ENCODE measurements at regions of chr11 and their contacts with region 1.

Region 1: DNA sequence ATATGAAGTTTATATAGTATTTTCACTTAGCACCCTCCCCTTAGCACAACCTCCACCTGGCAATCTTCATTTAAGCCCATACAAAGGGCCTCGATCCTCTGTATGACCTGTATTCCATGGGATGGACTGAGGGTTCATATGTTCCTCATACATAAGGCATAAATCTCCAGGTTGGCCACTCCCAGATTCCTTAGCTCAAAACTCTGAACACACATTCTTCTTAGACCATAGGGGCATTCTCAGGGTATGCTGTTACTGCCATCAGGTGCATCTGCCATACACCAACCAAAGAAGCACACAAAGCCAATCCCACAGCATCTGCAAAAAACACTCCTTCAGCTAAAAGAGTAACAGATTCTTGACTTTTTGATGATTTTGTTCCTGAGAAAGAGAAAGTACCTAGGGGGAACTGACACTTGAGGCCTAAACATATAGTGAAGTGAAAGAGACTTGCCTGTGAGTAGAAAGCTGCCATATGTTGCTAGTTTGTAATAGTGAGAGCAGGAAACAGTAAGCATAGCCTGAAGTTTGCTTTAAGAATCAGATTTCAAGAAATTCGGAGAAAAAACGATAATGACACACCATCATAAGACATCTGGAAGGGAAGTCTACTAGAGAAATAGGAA is 97.8 kb upstream of the CTSC start:
- DNase-seq: no peak

Region 2: GRCh38 chr11:88377144-88377543 is 58.2 kb before region 1 on chr11:
- intact Hi-C with region 1: no loop called
- DNase-seq: no peak

Region 3: GRCh38 chr11:88482871-88483301 is 47.6 kb after region 1 on chr11:
- intact Hi-C with region 1: loop called in 1 of 2 experiments (anchors 2 kb)
- DNase-seq: no peak